ENCODE measurements at regions of chr5 and their contacts with region 1.

Region 1: DNA sequence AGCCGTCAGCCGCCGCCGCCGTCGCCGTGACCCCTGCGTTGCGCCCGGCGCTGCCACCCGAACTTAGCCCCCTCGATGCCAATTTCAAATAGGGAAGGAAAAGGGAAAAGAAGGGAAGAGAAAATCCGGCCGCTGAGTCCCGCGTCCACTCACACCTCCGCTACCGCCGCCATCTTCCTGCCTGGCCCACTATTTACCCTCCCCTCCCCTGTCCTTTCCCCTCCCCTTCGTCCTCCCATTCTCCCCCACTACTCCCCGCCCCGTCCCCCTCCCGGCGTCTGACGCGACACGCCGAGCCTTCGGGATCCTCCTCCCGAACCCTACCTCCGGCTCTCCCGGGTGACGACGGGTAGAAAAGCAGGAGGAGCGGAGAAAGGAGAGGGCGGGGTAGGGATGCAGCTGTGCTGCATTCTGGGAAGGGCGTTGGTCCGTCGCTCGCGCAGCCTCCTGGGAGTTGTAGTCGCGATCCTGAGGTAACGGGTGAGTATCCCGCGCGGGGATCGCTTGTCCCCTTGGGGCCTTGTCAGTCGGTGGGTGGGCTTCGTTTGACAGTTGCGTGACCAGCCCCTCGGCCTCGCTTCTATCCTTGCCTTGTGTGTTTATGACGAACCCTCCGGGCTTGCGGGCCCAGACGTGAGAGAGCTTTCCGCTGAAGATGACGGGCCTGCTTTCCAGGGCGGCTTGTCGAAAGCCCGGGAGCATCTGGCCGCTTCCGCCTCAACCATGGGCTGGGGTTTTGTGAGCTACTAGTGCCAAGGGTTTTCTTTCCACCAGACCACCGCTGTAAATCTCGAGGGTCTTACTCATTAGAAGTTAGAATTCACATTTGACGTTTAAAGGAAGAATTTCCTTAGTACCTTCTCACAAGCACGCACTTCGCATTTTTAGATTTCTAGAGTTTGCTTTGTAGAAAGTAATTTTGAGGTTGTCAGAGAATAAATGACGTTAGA is at the starts of genes CERT1 and POLK:
- DNase-seq: peak; percentile 70 to 94 (median 90)
- ATAC-seq: peak; percentile 95
- H3K4me3 ChIP-seq: peak within 1 kb of the TSS; percentile 78
- H3K4me3 Mint-ChIP-seq: peak within 1 kb of the TSS; percentile 89 to 97 (median 94)
- H3K27ac ChIP-seq: peak within 1 kb of the TSS; percentile 75
- H3K27ac Mint-ChIP-seq: peak within 1 kb of the TSS; percentile 84 to 98 (median 93)
- H3K4me1 ChIP-seq: peaks cover 14 to 28% of the 10 kb centered on the region in 2 donors
- H3K4me1 Mint-ChIP-seq: peaks cover 29 to 77% (median 54%) of the 10 kb centered on the region in 7 donors
- H3K27me3 ChIP-seq: no peaks in the 10 kb centered on the region
- H3K27me3 Mint-ChIP-seq: no peaks in the 10 kb centered on the region
- total RNA-seq, gene CERT1: 34.4 to 60.4 (median 39.3) TPM
- total RNA-seq, gene POLK: 20.6 to 36.6 (median 24.9) TPM

Region 2: DNA sequence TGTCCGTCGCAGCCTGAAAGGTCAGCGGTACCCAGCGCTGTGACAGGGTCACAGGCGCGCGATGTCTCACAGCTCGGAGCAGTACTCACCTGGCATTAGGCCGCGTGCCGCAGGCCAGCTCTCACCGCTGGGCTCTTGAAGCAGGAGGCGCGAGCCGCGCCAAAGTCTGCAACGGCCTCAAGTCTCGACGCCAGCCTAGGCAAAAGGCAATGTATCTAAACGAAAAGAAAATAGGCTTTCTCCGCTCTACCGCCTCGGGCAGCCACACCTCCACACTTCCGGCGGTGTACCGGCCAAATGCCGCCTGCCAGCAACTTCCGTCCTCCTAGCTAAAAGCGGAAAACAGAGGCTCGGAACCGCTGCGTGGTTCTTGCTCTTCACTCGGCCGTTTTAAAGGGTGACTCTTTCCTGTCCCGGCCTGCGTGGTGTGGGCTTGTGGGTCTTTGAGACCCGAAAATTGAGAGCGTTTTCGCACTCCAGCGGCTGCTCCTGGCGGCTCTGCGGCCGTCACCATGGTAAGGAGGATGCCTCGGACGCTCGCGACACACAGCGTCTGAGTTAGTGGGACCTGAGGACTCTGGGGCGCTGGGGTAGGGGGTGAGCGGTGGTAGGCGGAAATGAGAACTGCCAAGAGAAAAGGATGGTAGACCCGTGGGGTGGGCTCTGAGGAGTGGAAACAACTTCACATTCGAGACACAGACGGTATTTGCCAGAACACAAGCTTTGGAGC is 744.7 kb before region 1 on chr5 and contains the starts of genes GFM2 and NSA2:
- CTCF ChIA-PET with region 1: no interaction called
- POLR2A ChIA-PET with region 1: no interaction called
- intact Hi-C with region 1: loop called (anchors 2 kb)
- DNase-seq: peak; percentile 77 to 94 (median 92)
- ATAC-seq: peak; percentile 97
- H3K4me3 ChIP-seq: peak within 1 kb of the TSS; percentile 98
- H3K4me3 Mint-ChIP-seq: peak within 1 kb of the TSS; percentile 97 to 100 (median 99)
- H3K27ac ChIP-seq: peak within 1 kb of the TSS; percentile 81
- H3K27ac Mint-ChIP-seq: peak within 1 kb of the TSS; percentile 95 to 99 (median 98)
- H3K4me1 ChIP-seq: peaks cover 22% of the 10 kb centered on the region in 2 donors
- H3K4me1 Mint-ChIP-seq: peaks cover 12 to 57% (median 40%) of the 10 kb centered on the region in 7 donors
- H3K27me3 ChIP-seq: no peaks in the 10 kb centered on the region
- H3K27me3 Mint-ChIP-seq: no peaks in the 10 kb centered on the region
- total RNA-seq, gene GFM2: 17.8 to 30.2 (median 20.5) TPM
- total RNA-seq, gene NSA2: 70.9 to 153 (median 126) TPM

Region 3: DNA sequence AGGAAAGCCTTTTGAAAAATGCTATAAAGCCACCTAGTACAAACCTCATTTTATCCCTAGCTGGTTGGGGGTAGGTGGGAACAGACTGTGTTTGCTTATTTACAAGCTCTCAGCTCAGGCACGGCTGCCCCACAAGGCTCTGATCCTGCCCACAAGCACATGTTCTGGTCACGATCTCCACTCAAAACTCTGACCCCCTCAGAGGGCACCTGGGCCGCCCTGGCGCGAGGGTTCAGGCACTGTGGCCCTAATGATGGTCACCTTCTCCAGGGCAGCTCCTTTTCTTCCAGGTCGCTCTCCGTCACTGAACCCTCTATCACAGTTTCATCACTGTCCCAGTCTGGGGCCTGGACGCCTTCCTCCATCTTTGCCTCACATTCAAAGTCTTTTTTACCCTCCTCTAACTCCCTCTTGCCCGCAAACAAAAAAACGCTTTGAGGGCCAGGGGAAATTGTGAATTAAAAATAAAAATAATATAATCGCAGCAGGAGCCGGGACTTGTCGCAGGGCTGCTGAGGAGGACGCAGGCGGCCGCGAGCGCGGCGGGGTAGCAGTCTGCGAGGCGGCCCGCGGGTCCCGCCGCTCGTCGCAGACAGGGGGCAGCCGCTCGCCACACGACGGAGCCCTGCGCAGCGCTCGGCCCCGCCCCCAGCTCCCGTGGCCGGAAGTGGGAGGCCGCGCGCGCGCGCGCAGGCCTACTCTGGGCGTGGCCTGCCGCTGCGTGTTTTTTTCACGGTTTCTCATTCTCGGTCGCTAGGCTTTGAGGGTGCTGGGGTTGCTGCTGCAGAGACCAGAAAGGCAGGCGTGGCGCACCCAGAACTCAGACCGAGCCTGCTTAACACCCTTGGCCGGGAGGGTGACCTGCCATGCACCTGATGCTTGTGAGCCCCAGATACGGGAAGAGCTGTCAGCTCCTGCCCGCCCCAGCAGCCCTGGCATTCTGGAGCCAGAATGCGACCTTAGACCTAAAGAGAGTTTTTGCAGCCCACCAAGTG is 275.1 kb before region 1 on chr5 and contains the start of gene ANKRD31:
- CTCF ChIA-PET with region 1: no interaction called
- POLR2A ChIA-PET with region 1: no interaction called
- intact Hi-C with region 1: loop called (anchors 1 kb)
- DNase-seq: peak; percentile 83 to 97 (median 93)
- ATAC-seq: peak; percentile 100
- H3K4me3 ChIP-seq: peak within 1 kb of the TSS; percentile 69
- H3K4me3 Mint-ChIP-seq: peak within 1 kb of the TSS; percentile 78 to 99 (median 96)
- H3K27ac ChIP-seq: peak within 1 kb of the TSS; percentile 80
- H3K27ac Mint-ChIP-seq: peak within 1 kb of the TSS; percentile 89 to 99 (median 98)
- H3K4me1 ChIP-seq: peaks cover 0 to 17% of the 10 kb centered on the region in 2 donors
- H3K4me1 Mint-ChIP-seq: peaks cover 3 to 22% (median 18%) of the 10 kb centered on the region in 7 donors
- H3K27me3 ChIP-seq: no peaks in the 10 kb centered on the region
- H3K27me3 Mint-ChIP-seq: peaks cover 0 to 4% (median 0%) of the 10 kb centered on the region in 5 donors
- total RNA-seq, gene ANKRD31: 0.29 to 1.6 (median 0.93) TPM

Region 4: GRCh38 chr5:75496026-75496425 is 15.7 kb before region 1 on chr5:
- CTCF ChIA-PET with region 1: no interaction called
- POLR2A ChIA-PET with region 1: no interaction called
- intact Hi-C with region 1: loop called in 1 of 2 experiments (anchors 2 kb)
- DNase-seq: no peak
- ATAC-seq: no peak
- H3K4me3 ChIP-seq: no peak overlapping the region
- H3K4me3 Mint-ChIP-seq: no peak overlapping the region
- H3K27ac ChIP-seq: no peak overlapping the region
- H3K27ac Mint-ChIP-seq: no peak overlapping the region
- H3K4me1 ChIP-seq: no peaks in the 10 kb centered on the region
- H3K4me1 Mint-ChIP-seq: peaks cover 4 to 44% (median 20%) of the 10 kb centered on the region in 7 donors
- H3K27me3 ChIP-seq: no peaks in the 10 kb centered on the region
- H3K27me3 Mint-ChIP-seq: no peaks in the 10 kb centered on the region

Region 5: DNA sequence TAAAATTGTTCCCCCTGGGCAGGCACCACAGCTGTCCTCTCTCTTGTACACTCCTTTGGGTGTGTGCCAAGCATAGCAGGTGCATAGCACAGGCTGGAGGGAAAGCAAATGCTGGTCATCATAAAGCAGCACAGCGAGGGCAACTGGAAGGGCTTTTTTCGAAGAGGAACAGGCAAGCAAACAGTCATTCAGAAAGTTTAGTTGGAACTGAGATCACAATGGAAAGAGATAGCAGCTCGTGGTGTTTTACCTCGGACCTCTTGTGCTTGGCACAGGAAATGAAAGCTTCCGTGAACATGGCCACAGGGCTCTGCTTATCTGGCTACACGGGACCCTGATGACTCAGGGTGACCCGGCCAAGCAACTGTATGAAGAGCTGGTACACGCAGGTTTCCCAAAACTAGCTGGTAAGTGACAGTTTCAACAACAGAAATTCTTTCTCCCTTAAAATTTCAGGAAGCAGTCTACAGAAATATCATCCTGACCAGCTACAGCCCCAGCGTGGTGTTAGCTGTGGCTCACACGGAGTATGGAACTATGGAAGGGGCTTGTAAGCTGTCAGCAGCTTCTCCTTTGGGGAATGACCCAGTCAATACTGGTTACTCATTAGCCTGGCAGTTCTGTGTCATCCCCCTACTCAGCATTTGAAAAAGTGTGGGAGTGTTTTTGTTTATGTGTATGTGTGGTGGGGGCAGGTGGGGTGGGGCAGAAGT is 157.4 kb after region 1 on chr5:
- CTCF ChIA-PET with region 1: no interaction called
- POLR2A ChIA-PET with region 1: no interaction called
- intact Hi-C with region 1: loop called in 1 of 2 experiments (anchors 5 kb)
- DNase-seq: peak in 3 of 9 donors; percentile 3 to 61 (median 10)
- ATAC-seq: peak; percentile 90
- H3K4me3 ChIP-seq: peak overlapping the region; percentile 52
- H3K4me3 Mint-ChIP-seq: peak overlapping the region; percentile 71 to 91 (median 84)
- H3K27ac ChIP-seq: peak overlapping the region; percentile 42
- H3K27ac Mint-ChIP-seq: peak overlapping the region; percentile 3 to 91 (median 64)
- H3K4me1 ChIP-seq: peaks cover 0 to 11% of the 10 kb centered on the region in 2 donors
- H3K4me1 Mint-ChIP-seq: peaks cover 7 to 26% (median 15%) of the 10 kb centered on the region in 7 donors
- H3K27me3 ChIP-seq: no peaks in the 10 kb centered on the region
- H3K27me3 Mint-ChIP-seq: no peaks in the 10 kb centered on the region

Region 6: GRCh38 chr5:77155179-77155785 is 1643.6 kb after region 1 on chr5:
- CTCF ChIA-PET with region 1: no interaction called
- POLR2A ChIA-PET with region 1: no interaction called
- intact Hi-C with region 1: loop called in 1 of 2 experiments (anchors 5 kb)
- DNase-seq: peak in 7 of 9 donors; percentile 81 to 94 (median 91)
- ATAC-seq: peak; percentile 96
- H3K4me3 ChIP-seq: no peak overlapping the region
- H3K4me3 Mint-ChIP-seq: peak overlapping the region in 9 of 10 donors; percentile 22 to 83 (median 60)
- H3K27ac ChIP-seq: peak overlapping the region; percentile 67
- H3K27ac Mint-ChIP-seq: peak overlapping the region in 8 of 9 donors; percentile 74 to 99 (median 96)
- H3K4me1 ChIP-seq: peaks cover 0 to 27% of the 10 kb centered on the region in 2 donors
- H3K4me1 Mint-ChIP-seq: peaks cover 17 to 40% (median 33%) of the 10 kb centered on the region in 7 donors
- H3K27me3 ChIP-seq: no peaks in the 10 kb centered on the region
- H3K27me3 Mint-ChIP-seq: peaks cover 0 to 12% (median 3%) of the 10 kb centered on the region in 5 donors